Activated CD8-positive, alpha-beta memory T cell treated with anti-CD3 and anti-CD28 coated beads, Interleukin-2, amount 10 ng/mL, durations not matched to agents 7 days and 5 days (primary cell): ENCODE measurements at regions of chr11 and their contacts with region 1.

Region 1: GRCh38 chr11:120235024-120235861 is 4.7 kb upstream of the POU2F3 start:
- DNase-seq: peak; percentile 80
- ATAC-seq: peak; percentile 82
- H3K4me3 Mint-ChIP-seq: no peak overlapping the region
- H3K27ac Mint-ChIP-seq: no peak overlapping the region
- H3K4me1 Mint-ChIP-seq: peaks cover 3% of the 10 kb centered on the region
- H3K27me3 Mint-ChIP-seq: peaks cover 72% of the 10 kb centered on the region

Region 2: DNA sequence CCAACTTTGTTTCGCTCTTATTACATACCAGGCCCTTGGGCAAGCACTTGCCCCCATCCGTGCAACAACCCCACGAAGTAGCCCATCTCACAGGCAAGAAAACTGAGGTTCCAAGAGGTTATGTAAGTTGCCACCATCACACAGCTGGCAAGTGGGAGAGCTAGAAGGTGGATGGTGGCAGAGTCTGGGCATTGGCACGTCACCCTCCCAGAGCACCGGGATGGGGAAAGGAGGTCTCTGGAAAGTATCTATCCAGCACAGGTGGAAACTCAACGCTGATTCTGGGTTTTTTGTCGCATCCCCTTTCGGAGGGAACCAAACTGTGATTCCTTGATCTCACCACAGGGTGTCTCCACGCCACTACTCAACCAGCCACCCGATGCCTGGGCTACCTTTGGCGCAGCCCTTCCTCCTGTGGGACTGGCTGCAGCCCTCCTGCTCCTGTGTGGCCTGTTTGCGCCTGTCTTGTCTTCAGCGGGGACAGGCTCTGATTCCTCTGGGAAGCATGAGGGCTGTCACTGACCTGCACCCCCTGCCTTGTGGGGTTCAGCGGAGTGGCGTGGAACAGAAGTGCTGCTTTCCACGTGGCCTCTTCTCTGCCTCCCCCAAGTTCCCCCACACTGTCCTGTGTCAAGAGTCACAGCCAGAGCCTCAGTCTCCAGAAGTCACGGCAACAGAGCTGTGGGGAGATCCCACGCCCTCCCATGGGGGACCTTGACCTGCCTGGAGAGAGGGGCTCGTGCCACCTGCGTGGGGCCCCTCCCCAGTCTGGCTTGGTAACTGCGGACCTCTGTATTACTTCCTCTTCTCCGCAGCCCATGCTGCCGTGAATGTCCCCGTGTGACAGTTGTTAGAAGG is 63.0 kb before region 1 on chr11:
- CTCF ChIA-PET with region 1: interaction called, 24 read pairs
- DNase-seq: peak; percentile 68
- ATAC-seq: peak; percentile 68
- H3K4me3 Mint-ChIP-seq: no peak overlapping the region
- H3K27ac Mint-ChIP-seq: no peak overlapping the region
- H3K4me1 Mint-ChIP-seq: peaks cover 4% of the 10 kb centered on the region
- H3K27me3 Mint-ChIP-seq: peaks cover 86% of the 10 kb centered on the region

Region 3: GRCh38 chr11:120182790-120183491 is 52.3 kb before region 1 on chr11:
- CTCF ChIA-PET with region 1: no interaction called
- DNase-seq: peak; percentile 23
- ATAC-seq: no peak
- H3K4me3 Mint-ChIP-seq: no peak overlapping the region
- H3K27ac Mint-ChIP-seq: no peak overlapping the region
- H3K4me1 Mint-ChIP-seq: peaks cover 7% of the 10 kb centered on the region
- H3K27me3 Mint-ChIP-seq: peaks cover 12% of the 10 kb centered on the region

Region 4: GRCh38 chr11:120248551-120249278 is 13.5 kb after region 1 on chr11:
- CTCF ChIA-PET with region 1: interaction called, 126 read pairs
- DNase-seq: peak; percentile 47
- ATAC-seq: peak; percentile 87
- H3K4me3 Mint-ChIP-seq: peak overlapping the region; percentile 59
- H3K27ac Mint-ChIP-seq: peak overlapping the region; percentile 78
- H3K4me1 Mint-ChIP-seq: peaks cover 64% of the 10 kb centered on the region
- H3K27me3 Mint-ChIP-seq: peaks cover 67% of the 10 kb centered on the region

Region 5: DNA sequence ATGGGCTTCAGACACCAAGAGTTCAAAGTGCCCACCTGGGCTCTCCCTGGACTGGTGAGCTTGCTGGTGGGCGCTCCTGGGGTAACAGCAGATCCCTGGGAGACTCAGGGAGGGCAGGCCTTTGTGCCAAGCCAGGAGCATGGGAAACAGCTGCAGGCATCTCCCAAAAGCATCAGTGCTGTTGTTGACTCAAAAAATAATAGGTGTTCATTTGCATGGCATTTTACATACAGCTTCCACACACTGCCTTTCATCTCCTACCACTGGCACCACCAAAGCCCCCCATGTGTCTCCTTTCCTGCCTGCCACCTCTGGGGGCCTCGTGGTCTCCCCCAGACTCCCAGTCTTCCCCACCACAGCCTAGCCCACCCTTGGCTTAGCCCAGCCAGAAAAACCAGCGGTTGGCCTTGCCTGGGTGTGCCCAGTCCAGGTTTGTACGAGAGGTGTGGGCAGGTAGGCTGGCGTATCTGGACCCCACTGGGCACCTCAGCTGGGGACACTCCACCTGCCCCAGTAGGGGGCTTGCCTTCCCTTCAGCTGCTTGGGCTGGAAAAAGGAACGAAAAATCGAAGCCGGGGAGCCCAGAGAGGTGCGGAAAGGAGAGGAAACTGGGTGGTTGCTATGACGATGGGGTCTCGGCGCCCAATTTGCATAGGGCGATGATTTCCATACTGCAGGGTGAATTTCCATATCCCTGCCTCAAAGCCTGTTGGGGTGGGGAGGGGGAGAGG is 19.7 kb after region 1 on chr11:
- CTCF ChIA-PET with region 1: interaction called, 126 read pairs
- DNase-seq: no peak
- ATAC-seq: no peak
- H3K4me3 Mint-ChIP-seq: no peak overlapping the region
- H3K27ac Mint-ChIP-seq: no peak overlapping the region
- H3K4me1 Mint-ChIP-seq: peaks cover 7% of the 10 kb centered on the region
- H3K27me3 Mint-ChIP-seq: peaks cover 88% of the 10 kb centered on the region

Region 6: DNA sequence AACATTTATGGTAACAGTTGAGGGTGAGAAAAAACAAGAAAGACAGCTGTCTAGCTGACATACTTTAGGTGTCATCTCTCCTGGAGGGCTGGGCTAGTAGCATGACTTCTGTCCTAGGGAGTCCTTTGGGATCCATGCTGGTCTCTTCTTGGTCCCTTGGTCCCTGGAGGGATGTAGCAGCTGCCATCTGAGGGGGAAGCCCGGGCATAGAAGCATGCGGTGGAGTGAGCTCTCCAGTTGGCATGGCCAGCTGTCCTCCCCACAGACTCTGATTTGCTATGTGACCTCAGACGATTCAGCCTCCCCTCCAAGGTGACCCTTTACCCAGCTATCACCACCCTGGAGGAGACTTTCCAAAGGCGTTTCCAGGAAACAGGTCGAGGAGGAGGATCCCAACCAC is 33.4 kb after region 1 on chr11:
- CTCF ChIA-PET with region 1: interaction called, 17 read pairs
- DNase-seq: no peak
- ATAC-seq: no peak
- H3K4me3 Mint-ChIP-seq: no peak overlapping the region
- H3K27ac Mint-ChIP-seq: no peak overlapping the region
- H3K4me1 Mint-ChIP-seq: no peaks in the 10 kb centered on the region
- H3K27me3 Mint-ChIP-seq: peaks cover 69% of the 10 kb centered on the region

Region 7: DNA sequence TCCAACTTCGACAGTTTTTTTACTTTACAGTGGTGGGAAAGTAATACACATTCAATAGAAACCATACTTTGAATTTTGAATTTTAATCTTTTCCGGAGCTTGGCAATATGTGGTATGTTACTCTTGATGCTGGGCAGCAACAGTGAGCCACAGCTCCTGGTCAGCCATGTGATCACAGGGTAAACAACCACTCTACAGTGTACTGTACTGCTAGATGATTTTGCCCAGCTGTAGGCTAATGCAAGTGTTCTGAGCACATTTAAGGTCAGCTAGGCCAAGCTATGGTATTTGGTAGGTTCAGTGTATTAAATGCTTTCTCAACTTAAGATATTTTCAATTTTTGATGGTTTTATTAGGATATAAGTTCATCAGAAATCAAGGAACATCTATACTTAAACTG is 227.6 kb after region 1 on chr11:
- CTCF ChIA-PET with region 1: no interaction called
- DNase-seq: no peak
- ATAC-seq: no peak
- H3K4me3 Mint-ChIP-seq: no peak overlapping the region
- H3K27ac Mint-ChIP-seq: no peak overlapping the region
- H3K4me1 Mint-ChIP-seq: no peaks in the 10 kb centered on the region
- H3K27me3 Mint-ChIP-seq: no peaks in the 10 kb centered on the region